ENCODE measurements at regions of chr9 and their contacts with region 1.

Region 1: GRCh38 chr9:72396247-72397091 is 31.5 kb upstream of the ZFAND5 start:
- DNase-seq: peak; percentile 28 to 73
- ATAC-seq: peak; percentile 92 to 94
- H3K4me3 ChIP-seq: no peak overlapping the region
- H3K27ac ChIP-seq: peak overlapping the region; percentile 50 to 54; a peak in 5 of 6 replicates
- H3K4me1 ChIP-seq: peaks cover 38% of the 10 kb centered on the region
- CTCF ChIP-seq: no peak
- EP300 ChIP-seq: peak in 1 of 2 experiments; percentile 30; a peak in 1 of 5 replicates
- POLR2A ChIP-seq: no peak
- RAD21 ChIP-seq: no peak; a peak in 1 of 5 replicates

Region 2: DNA sequence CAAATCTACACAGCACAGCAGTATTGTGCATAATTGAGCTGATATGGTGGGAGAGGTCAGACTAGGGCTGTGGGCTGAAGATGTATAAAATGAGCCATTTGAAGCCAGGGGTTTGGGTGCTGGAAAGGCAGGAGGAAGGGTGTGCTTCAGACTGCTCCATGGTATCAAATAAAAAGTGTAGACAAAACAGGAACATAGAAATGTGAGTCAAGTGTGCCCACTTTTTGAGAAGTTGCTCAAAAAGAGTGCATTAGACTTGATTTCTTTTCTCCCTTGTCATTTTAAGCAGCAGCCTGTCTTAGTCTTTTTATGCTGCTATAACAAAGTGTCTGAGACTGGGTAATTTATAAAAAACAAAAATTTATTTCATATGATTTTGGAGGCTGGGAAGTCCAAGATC is 24.3 kb after region 1 on chr9:
- CTCF ChIA-PET with region 1: interaction called, 4 read pairs
- POLR2A ChIA-PET with region 1: interaction called, 11 read pairs
- DNase-seq: no peak
- ATAC-seq: no peak
- H3K4me3 ChIP-seq: no peak overlapping the region
- H3K27ac ChIP-seq: no peak overlapping the region
- H3K4me1 ChIP-seq: no peaks in the 10 kb centered on the region
- CTCF ChIP-seq: no peak
- EP300 ChIP-seq: no peak
- POLR2A ChIP-seq: no peak
- RAD21 ChIP-seq: no peak

Measured in A549 (cell line).